Heart left ventricle (tissue), 16 donors: ENCODE measurements at regions of chr17 and their contacts with region 1.

Region 1: GRCh38 chr17:2828397-2829038 is 32.3 kb downstream of the RAP1GAP2 start:
- DNase-seq: peak; percentile 62 to 88 (median 71)
- ATAC-seq: peak; percentile 71 to 86 (median 86)
- H3K4me3 ChIP-seq: no peak overlapping the region
- H3K27ac ChIP-seq: no peak overlapping the region
- H3K4me1 ChIP-seq: peaks cover 0 to 15% (median 0%) of the 10 kb centered on the region in 12 donors
- H3K27me3 ChIP-seq: peaks cover 0 to 8% (median 0%) of the 10 kb centered on the region in 9 donors
- CTCF ChIP-seq: peak; percentile 81 to 98 (median 94)
- POLR2A ChIP-seq: no peak

Region 2: DNA sequence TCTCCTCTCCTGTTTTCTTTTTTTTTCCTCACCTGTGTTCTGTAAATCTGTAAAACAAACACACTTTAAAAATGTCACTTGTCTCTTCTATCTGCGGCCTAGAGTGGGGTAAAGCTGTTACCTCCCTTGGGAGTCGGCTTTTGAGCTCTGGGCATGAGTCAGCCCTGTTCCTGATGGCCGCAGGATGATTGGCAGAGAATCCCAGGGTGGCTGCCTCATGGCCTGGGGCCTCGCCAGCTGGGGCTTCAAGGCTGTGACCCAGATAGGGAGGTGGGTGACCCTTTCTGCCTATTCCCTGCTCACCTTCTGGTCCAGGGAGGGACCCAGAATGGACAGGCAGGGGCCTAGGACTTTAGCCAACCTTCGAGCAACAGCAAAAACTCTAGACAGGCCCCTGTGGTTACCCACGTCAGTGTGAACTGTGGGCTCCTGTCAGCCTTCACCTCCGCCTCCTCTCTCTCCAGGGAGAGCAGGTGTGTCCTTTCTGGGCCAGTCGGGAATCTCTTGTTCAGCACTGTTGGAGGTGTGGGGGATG is 55.1 kb after region 1 on chr17:
- intact Hi-C with region 1: no loop called
- DNase-seq: peak in 4 of 5 donors; percentile 45 to 66 (median 55)
- ATAC-seq: peak; percentile 80 to 90 (median 86)
- H3K4me3 ChIP-seq: no peak overlapping the region
- H3K27ac ChIP-seq: peak overlapping the region in 9 of 12 donors; percentile 11 to 71 (median 46)
- H3K4me1 ChIP-seq: peaks cover 0 to 14% (median 5%) of the 10 kb centered on the region in 12 donors
- H3K27me3 ChIP-seq: no peaks in the 10 kb centered on the region
- CTCF ChIP-seq: no peak
- POLR2A ChIP-seq: no peak

Region 3: DNA sequence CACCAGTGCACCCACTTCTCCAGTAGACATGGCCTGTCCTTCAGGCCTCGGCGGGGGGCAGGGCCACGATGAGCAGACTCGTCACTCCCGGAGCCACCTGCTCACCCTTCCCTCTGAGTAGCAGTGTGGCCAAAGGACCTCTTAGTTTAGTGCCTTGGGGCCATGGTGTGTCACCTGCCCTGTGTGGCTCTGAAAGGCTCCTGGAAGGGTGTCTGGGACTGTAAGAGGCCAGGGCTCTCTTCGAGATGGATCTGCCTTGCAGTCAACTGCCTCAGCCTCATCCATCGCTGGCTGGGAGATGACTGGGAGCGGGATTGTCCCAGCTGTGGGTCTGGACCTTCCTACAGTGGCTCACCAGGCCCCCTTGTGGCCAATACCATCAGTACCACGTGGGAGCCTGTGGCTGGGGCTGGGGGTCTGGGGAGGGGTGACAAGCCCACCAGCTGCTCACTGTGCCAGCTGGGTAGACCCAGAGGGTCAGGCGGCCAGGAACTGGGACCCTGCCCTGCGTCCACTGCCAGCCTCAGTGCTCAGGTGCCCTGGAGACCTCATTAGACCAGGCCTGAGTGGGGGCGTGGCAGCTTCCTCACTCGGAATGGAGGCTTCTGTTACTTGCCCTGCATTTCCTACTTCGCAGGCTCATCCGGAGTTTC is 101.5 kb after region 1 on chr17:
- intact Hi-C with region 1: loop called in 2 of 10 experiments (anchors 2 to 5 kb)
- DNase-seq: peak in 1 of 5 donors; percentile 39
- ATAC-seq: peak; percentile 56 to 79 (median 70)
- H3K4me3 ChIP-seq: no peak overlapping the region
- H3K27ac ChIP-seq: no peak overlapping the region
- H3K4me1 ChIP-seq: no peaks in the 10 kb centered on the region
- H3K27me3 ChIP-seq: no peaks in the 10 kb centered on the region
- CTCF ChIP-seq: peak; percentile 47 to 70 (median 60)
- POLR2A ChIP-seq: no peak

Region 4: GRCh38 chr17:3004133-3004801 is 175.7 kb after region 1 on chr17:
- intact Hi-C with region 1: loop called in 1 of 10 experiments (anchors 2 kb)
- DNase-seq: peak; percentile 98 to 99 (median 99)
- ATAC-seq: peak; percentile 93 to 96 (median 94)
- H3K4me3 ChIP-seq: peak overlapping the region in 9 of 12 donors; percentile 6 to 38 (median 27)
- H3K27ac ChIP-seq: peak overlapping the region; percentile 59 to 91 (median 84)
- H3K4me1 ChIP-seq: peaks cover 0 to 39% (median 29%) of the 10 kb centered on the region in 12 donors
- H3K27me3 ChIP-seq: no peaks in the 10 kb centered on the region
- CTCF ChIP-seq: no peak
- POLR2A ChIP-seq: peak in 1 of 2 donors; percentile 18

Region 5: DNA sequence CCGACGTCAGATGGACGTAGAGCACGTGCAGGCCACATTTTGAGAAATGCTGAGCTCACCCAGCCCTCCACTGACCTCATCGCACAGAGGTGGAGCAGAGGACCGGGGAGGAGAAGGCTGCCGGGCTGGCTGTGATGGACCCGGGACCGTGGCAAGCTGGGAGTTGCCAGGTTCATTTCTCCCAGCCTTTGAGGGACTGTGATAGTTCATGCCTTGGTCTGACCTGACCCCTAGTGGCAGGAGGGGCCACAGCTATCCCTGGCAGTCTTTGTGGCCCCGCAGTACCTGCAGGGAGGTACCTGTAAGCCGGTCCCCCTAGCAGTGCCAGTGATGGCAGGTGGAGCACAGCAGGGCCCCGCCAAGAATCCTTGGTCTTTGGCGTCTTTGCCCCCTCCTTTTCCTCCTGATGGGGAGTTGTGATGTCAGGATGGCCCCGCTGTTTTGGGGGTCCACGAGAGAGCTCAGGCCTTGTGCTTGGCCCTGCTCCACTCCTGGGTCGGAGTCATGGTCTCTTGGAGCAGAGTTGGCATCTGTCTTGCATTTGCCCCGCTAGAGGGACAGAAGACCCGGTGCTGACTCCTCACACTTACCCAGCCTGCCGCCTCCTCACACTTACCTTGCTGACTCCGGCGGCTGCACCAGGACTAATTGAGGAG is 184.5 kb after region 1 on chr17:
- intact Hi-C with region 1: loop called (anchors 1 to 2 kb)
- DNase-seq: peak; percentile 61 to 72 (median 62)
- ATAC-seq: peak; percentile 76 to 90 (median 87)
- H3K4me3 ChIP-seq: no peak overlapping the region
- H3K27ac ChIP-seq: no peak overlapping the region
- H3K4me1 ChIP-seq: peaks cover 0 to 4% (median 0%) of the 10 kb centered on the region in 12 donors
- H3K27me3 ChIP-seq: no peaks in the 10 kb centered on the region
- CTCF ChIP-seq: peak; percentile 66 to 87 (median 82)
- POLR2A ChIP-seq: no peak